ENCODE measurements at regions of chr10 and their contacts with region 1.

Region 1: GRCh38 chr10:111944331-111944730 is 239.2 kb downstream of the GPAM start:
- DNase-seq: no peak
- ATAC-seq: no peak
- H3K4me3 ChIP-seq: no peak overlapping the region
- H3K4me3 Mint-ChIP-seq: no peak overlapping the region
- H3K27ac ChIP-seq: no peak overlapping the region
- H3K27ac Mint-ChIP-seq: no peak overlapping the region
- H3K4me1 ChIP-seq: no peaks in the 10 kb centered on the region
- H3K4me1 Mint-ChIP-seq: no peaks in the 10 kb centered on the region
- H3K27me3 ChIP-seq: no peaks in the 10 kb centered on the region
- H3K27me3 Mint-ChIP-seq: no peaks in the 10 kb centered on the region
- CTCF ChIP-seq: no peak

Region 2: GRCh38 chr10:111821871-111822270 is 122.5 kb before region 1 on chr10:
- intact Hi-C with region 1: no loop called
- DNase-seq: no peak
- ATAC-seq: no peak
- H3K4me3 ChIP-seq: no peak overlapping the region
- H3K4me3 Mint-ChIP-seq: no peak overlapping the region
- H3K27ac ChIP-seq: no peak overlapping the region
- H3K27ac Mint-ChIP-seq: no peak overlapping the region
- H3K4me1 ChIP-seq: no peaks in the 10 kb centered on the region
- H3K4me1 Mint-ChIP-seq: no peaks in the 10 kb centered on the region
- H3K27me3 ChIP-seq: no peaks in the 10 kb centered on the region
- H3K27me3 Mint-ChIP-seq: no peaks in the 10 kb centered on the region
- CTCF ChIP-seq: no peak

Region 3: GRCh38 chr10:111954386-111954785 is 10.1 kb after region 1 on chr10:
- intact Hi-C with region 1: no loop called
- DNase-seq: no peak
- ATAC-seq: no peak
- H3K4me3 ChIP-seq: no peak overlapping the region
- H3K4me3 Mint-ChIP-seq: no peak overlapping the region
- H3K27ac ChIP-seq: no peak overlapping the region
- H3K27ac Mint-ChIP-seq: no peak overlapping the region
- H3K4me1 ChIP-seq: no peaks in the 10 kb centered on the region
- H3K4me1 Mint-ChIP-seq: no peaks in the 10 kb centered on the region
- H3K27me3 ChIP-seq: no peaks in the 10 kb centered on the region
- H3K27me3 Mint-ChIP-seq: no peaks in the 10 kb centered on the region
- CTCF ChIP-seq: no peak

Region 4: DNA sequence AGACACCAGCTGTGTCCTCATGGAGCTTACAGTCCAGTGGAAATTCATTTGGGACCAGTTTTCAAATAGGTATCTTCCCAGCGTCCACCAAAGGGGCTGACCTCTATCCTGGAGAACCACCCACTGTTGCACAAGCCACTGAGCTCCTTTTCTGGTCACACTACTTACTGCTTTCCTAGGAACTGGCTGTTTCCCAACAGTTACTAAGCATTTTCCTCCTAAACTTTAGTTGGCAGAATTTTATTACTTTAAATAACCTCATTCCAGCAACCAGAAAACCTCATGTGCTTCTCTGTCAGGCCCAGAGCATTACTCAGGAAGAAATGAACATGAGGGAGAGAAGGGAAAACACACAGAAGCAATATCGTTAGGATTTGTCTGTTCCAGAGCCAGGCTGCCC is 56.1 kb after region 1 on chr10:
- intact Hi-C with region 1: loop called (anchors 10 kb)
- DNase-seq: no peak
- ATAC-seq: no peak
- H3K4me3 ChIP-seq: no peak overlapping the region
- H3K4me3 Mint-ChIP-seq: no peak overlapping the region
- H3K27ac ChIP-seq: no peak overlapping the region
- H3K27ac Mint-ChIP-seq: no peak overlapping the region
- H3K4me1 ChIP-seq: no peaks in the 10 kb centered on the region
- H3K4me1 Mint-ChIP-seq: no peaks in the 10 kb centered on the region
- H3K27me3 ChIP-seq: no peaks in the 10 kb centered on the region
- H3K27me3 Mint-ChIP-seq: no peaks in the 10 kb centered on the region
- CTCF ChIP-seq: no peak

Measured in natural killer cell (primary cell).